CD4-positive, alpha-beta memory T cell (primary cell): ENCODE measurements at regions of chr18 and their contacts with region 1.

Region 1: DNA sequence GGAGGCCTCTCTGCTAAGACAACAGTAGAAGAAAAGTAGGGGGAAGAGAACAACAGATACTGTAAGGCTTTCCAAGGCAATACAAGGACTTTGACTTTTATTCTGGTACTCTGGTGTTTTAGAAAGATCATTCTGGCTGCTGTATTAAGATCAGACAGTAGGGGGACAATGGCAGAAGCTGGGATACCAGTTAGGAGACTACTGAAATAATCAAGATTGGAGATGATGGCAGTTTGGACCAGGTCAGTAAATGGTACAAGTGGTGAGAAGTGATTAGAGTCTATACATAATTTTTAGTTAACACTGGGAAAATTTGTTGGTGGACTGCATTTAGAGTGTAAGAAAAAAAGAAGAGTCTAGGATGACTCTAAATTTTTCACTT is 139.7 kb downstream of the ROCK1 start:
- DNase-seq: peak in 3 of 5 donors; percentile 7 to 15 (median 14)
- H3K4me3 ChIP-seq: no peak overlapping the region
- H3K4me3 Mint-ChIP-seq: no peak overlapping the region
- H3K27ac ChIP-seq: no peak overlapping the region
- H3K27ac Mint-ChIP-seq: peak overlapping the region in 1 of 7 donors; percentile 19
- H3K4me1 ChIP-seq: no peaks in the 10 kb centered on the region
- H3K4me1 Mint-ChIP-seq: peaks cover 0 to 7% (median 2%) of the 10 kb centered on the region in 4 donors
- H3K27me3 ChIP-seq: no peaks in the 10 kb centered on the region
- H3K27me3 Mint-ChIP-seq: no peaks in the 10 kb centered on the region

Region 2: DNA sequence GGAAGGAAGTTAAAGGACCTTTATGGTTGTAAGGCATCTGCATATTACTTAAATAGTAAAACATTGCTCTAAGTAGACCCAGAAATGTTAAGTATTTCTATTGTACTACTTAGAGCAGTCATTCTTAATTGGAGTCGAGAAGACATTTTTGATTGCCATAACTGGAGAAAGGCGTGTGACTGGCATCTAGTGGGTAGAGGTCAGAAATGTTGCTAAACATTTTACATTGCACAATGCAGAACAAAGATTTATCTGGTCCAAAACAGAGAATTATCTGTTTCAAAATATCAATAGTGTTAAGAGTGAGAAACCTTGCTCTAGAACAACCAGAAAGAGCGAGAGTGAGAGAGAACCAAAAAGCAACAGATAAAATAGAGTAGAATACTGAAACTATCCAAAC is 163.0 kb after region 1 on chr18:
- CTCF ChIA-PET with region 1: interaction called, 6 read pairs
- POLR2A ChIA-PET with region 1: no interaction called
- intact Hi-C with region 1: loop called (anchors 1 kb)
- DNase-seq: peak in 4 of 5 donors; percentile 24 to 43 (median 34)
- H3K4me3 ChIP-seq: no peak overlapping the region
- H3K4me3 Mint-ChIP-seq: no peak overlapping the region
- H3K27ac ChIP-seq: no peak overlapping the region
- H3K27ac Mint-ChIP-seq: no peak overlapping the region
- H3K4me1 ChIP-seq: no peaks in the 10 kb centered on the region
- H3K4me1 Mint-ChIP-seq: peaks cover 0 to 3% (median 1%) of the 10 kb centered on the region in 4 donors
- H3K27me3 ChIP-seq: no peaks in the 10 kb centered on the region
- H3K27me3 Mint-ChIP-seq: no peaks in the 10 kb centered on the region

Region 3: GRCh38 chr18:21179590-21180220 is 207.8 kb after region 1 on chr18:
- CTCF ChIA-PET with region 1: interaction called, 4 read pairs
- POLR2A ChIA-PET with region 1: no interaction called
- intact Hi-C with region 1: loop called (anchors 1 kb)
- DNase-seq: peak in 4 of 5 donors; percentile 22 to 37 (median 28)
- H3K4me3 ChIP-seq: no peak overlapping the region
- H3K4me3 Mint-ChIP-seq: no peak overlapping the region
- H3K27ac ChIP-seq: no peak overlapping the region
- H3K27ac Mint-ChIP-seq: no peak overlapping the region
- H3K4me1 ChIP-seq: no peaks in the 10 kb centered on the region
- H3K4me1 Mint-ChIP-seq: peaks cover 0 to 19% (median 5%) of the 10 kb centered on the region in 4 donors
- H3K27me3 ChIP-seq: no peaks in the 10 kb centered on the region
- H3K27me3 Mint-ChIP-seq: no peaks in the 10 kb centered on the region

Region 4: GRCh38 chr18:21513292-21513691 is 541.4 kb after region 1 on chr18:
- CTCF ChIA-PET with region 1: no interaction called
- POLR2A ChIA-PET with region 1: no interaction called
- intact Hi-C with region 1: no loop called
- DNase-seq: no peak
- H3K4me3 ChIP-seq: no peak overlapping the region
- H3K4me3 Mint-ChIP-seq: no peak overlapping the region
- H3K27ac ChIP-seq: no peak overlapping the region
- H3K27ac Mint-ChIP-seq: peak overlapping the region in 1 of 7 donors; percentile 53
- H3K4me1 ChIP-seq: no peaks in the 10 kb centered on the region
- H3K4me1 Mint-ChIP-seq: peaks cover 0 to 2% (median 0%) of the 10 kb centered on the region in 4 donors
- H3K27me3 ChIP-seq: no peaks in the 10 kb centered on the region
- H3K27me3 Mint-ChIP-seq: no peaks in the 10 kb centered on the region